Right ventricle myocardium inferior (tissue), 1 donor: ENCODE measurements at regions of chr1 and their contacts with region 1.

Region 1: GRCh38 chr1:169893494-169894362 is at the start of gene SCYL3:
- DNase-seq: peak; percentile 96
- ATAC-seq: peak; percentile 99
- total RNA-seq, gene SCYL3: 5.6 TPM

Region 2: DNA sequence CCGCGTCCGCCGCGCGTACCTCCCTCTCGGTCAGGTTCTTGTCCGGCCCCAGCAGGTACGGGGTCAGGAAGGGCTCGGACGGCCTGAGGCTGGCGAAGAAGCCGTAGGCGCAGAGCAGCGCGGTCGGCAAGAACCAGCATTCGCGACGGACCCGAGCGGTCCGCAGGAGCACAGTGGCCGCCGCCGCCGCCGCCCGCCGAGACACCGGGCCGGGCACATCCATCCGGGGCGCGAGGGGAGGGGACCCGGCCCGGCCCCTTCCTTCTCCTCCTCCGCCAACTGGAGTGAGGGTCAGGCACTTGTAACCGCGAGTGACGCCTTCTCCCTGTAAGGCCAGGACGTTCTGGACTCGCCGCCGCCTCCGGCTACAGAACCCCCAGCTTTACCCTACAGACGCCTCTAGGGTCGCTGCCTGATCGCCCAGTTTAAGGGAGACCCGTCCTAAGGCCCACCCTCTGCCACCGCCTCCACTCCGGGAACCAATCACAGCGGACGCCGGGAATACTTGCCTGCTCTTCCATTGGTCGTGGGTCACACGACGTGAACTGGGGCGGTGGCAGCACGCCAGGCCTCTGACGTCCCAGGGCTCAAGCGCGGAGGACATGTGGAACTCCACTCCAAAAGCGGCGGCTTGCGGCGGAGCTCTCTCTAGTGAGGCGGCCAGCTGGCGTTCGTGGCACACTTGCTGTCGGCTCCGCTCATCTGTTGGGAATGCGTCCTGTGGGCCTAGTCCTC is 408.0 kb before region 1 on chr1 and contains the start of gene SLC19A2:
- intact Hi-C with region 1: loop called (anchors 5 kb)
- DNase-seq: peak; percentile 100
- ATAC-seq: peak; percentile 98
- total RNA-seq, gene SLC19A2: 16.5 TPM

Region 3: GRCh38 chr1:169809370-169810095 is 84.2 kb before region 1 on chr1:
- intact Hi-C with region 1: no loop called
- DNase-seq: no peak
- ATAC-seq: no peak

Region 4: DNA sequence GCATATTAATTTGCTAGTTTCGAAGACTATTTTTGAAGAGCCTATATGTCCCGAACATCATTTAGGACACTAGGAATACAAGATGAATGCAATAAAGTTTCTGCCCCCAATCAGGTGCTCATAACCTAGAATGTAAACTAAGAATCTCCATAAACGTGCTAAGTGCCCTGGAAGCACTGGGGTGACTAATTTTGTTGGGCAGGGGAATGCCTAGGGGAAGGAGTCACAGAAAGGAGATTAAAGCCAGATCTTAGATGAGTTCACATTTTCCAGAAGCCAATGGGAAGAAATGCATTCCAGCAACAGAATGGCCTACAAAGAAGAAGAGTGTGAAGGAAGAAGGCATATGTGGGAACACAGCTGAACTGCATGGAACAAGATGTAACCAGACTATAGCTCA is 19.5 kb before region 1 on chr1:
- intact Hi-C with region 1: no loop called
- DNase-seq: no peak
- ATAC-seq: no peak